CD4-positive, alpha-beta T cell (primary cell): ENCODE measurements at regions of chr7 and their contacts with region 1.

Region 1: DNA sequence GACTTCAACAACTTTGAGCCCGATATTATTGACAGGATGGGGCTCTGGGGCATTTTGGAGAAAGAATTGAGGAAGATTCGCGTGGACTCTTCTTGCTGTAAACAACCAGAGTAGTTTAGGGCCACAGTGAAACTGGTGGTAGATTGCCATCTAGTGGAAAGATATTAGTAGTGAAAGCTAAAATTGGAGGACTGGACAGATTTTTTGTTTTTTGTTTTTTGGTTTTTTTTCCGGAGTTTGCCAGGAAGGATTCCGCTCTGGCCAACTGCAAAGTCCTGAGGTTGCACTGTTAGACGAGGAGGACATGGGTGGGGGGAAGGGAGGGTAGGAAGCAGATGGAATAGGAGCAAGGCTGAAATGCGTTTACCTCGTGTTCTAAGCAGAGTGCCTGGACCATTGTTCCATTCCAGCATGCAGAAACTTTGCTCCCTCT is 11.7 kb downstream of the NOBOX start:
- DNase-seq: peak in 5 of 14 experiments; percentile 5 to 74 (median 71)
- ATAC-seq: peak; percentile 82
- H3K4me3 ChIP-seq: no peak overlapping the region
- H3K4me3 Mint-ChIP-seq: peak overlapping the region; percentile 65
- H3K27ac ChIP-seq: no peak overlapping the region
- H3K27ac Mint-ChIP-seq: no peak overlapping the region
- H3K4me1 ChIP-seq: peaks cover 7% of the 10 kb centered on the region
- H3K4me1 Mint-ChIP-seq: peaks cover 6% of the 10 kb centered on the region
- H3K27me3 ChIP-seq: no peaks in the 10 kb centered on the region
- H3K27me3 Mint-ChIP-seq: no peaks in the 10 kb centered on the region
- CTCF ChIP-seq: peak; percentile 79

Region 2: DNA sequence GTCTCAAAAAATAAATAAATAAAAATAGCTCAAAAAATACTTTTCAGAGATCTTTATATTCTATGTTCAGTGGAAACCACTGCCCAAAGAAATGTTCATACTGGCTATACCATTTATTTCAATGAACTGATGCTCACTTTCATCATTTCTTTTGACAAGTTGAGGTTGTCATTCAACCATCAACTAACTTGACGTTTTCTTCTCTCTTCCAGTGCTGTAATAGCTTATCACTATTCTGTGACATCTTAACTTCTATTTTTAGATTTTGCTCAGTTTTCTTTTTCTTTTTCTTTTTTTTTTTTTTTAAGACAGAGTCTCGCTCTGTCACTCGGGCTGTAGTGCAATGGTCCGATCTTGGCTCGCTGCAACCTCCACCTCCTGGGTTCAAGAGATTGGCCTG is 217.2 kb before region 1 on chr7:
- CTCF ChIA-PET with region 1: no interaction called
- POLR2A ChIA-PET with region 1: no interaction called
- intact Hi-C with region 1: loop called (anchors 5 kb)
- DNase-seq: no peak
- ATAC-seq: no peak
- H3K4me3 ChIP-seq: no peak overlapping the region
- H3K4me3 Mint-ChIP-seq: no peak overlapping the region
- H3K27ac ChIP-seq: no peak overlapping the region
- H3K27ac Mint-ChIP-seq: no peak overlapping the region
- H3K4me1 ChIP-seq: no peaks in the 10 kb centered on the region
- H3K4me1 Mint-ChIP-seq: no peaks in the 10 kb centered on the region
- H3K27me3 ChIP-seq: no peaks in the 10 kb centered on the region
- H3K27me3 Mint-ChIP-seq: peaks cover 11% of the 10 kb centered on the region
- CTCF ChIP-seq: no peak

Region 3: DNA sequence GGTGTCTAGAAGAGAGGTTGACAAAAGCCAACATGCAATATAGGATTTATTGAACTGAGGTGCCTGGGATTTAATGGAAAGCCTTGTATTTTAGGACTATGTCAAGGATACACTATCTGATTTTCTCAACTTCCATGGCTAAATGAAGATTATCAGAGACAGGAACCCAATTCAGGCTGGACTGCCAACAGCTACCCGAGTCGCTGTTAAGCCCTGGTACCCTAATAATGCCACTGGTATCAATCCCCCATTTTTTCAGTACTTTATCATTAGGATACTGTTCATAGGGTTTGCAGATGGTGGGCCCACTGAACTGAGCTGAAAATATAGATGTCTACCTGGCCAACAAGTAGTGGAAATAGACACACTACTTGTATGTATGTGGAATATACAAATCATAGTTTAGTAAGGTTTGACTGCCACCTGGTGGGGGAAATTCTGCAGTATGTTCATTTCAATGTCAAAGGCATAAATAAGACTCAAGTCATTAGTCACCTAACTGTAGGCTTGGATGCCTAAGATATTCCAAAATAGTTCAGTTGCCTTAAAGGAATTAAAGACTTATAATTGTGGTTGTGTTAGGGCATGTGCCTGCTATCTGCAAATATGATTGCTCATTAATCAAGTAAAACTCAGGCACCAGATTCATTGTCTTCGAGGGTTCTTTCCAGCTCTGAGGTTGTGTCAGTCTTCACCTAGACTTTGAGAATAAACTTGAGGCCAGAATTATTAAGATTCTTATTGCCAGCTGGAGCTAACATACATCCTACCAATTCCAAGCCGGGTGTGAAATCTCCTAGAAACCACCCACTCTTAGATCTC is 45.7 kb after region 1 on chr7:
- CTCF ChIA-PET with region 1: no interaction called
- POLR2A ChIA-PET with region 1: no interaction called
- intact Hi-C with region 1: loop called in 1 of 2 experiments (anchors 1 kb)
- DNase-seq: peak in 13 of 14 experiments; percentile 1 to 63 (median 27)
- ATAC-seq: peak; percentile 39
- H3K4me3 ChIP-seq: no peak overlapping the region
- H3K4me3 Mint-ChIP-seq: no peak overlapping the region
- H3K27ac ChIP-seq: no peak overlapping the region
- H3K27ac Mint-ChIP-seq: no peak overlapping the region
- H3K4me1 ChIP-seq: no peaks in the 10 kb centered on the region
- H3K4me1 Mint-ChIP-seq: no peaks in the 10 kb centered on the region
- H3K27me3 ChIP-seq: no peaks in the 10 kb centered on the region
- H3K27me3 Mint-ChIP-seq: peaks cover 8% of the 10 kb centered on the region
- CTCF ChIP-seq: peak; percentile 39